ENCODE measurements at regions of chr1 and their contacts with region 1.

Region 1: GRCh38 chr1:51569284-51570062 is 47.4 kb upstream of the OSBPL9 start:
- DNase-seq: peak; percentile 87 to 98
- H3K4me3 ChIP-seq: peak overlapping the region; percentile 22; the same call in 1 of the 2 replicates
- H3K27ac ChIP-seq: peak overlapping the region; percentile 97
- H3K4me1 ChIP-seq: peaks cover 80% of the 10 kb centered on the region
- H3K27me3 ChIP-seq: no peaks in the 10 kb centered on the region
- CTCF ChIP-seq: peak; percentile 52

Region 2: GRCh38 chr1:51558360-51558924 is 11.0 kb before region 1 on chr1:
- CTCF ChIA-PET with region 1: no interaction called
- POLR2A ChIA-PET with region 1: interaction called, 17 read pairs
- intact Hi-C with region 1: loop called (anchors 1 kb)
- DNase-seq: peak; percentile 93 to 99
- H3K4me3 ChIP-seq: peak overlapping the region; percentile 45; the same call in 1 of the 2 replicates
- H3K27ac ChIP-seq: peak overlapping the region; percentile 99
- H3K4me1 ChIP-seq: peaks cover 70% of the 10 kb centered on the region
- H3K27me3 ChIP-seq: no peaks in the 10 kb centered on the region
- CTCF ChIP-seq: no peak

Region 3: DNA sequence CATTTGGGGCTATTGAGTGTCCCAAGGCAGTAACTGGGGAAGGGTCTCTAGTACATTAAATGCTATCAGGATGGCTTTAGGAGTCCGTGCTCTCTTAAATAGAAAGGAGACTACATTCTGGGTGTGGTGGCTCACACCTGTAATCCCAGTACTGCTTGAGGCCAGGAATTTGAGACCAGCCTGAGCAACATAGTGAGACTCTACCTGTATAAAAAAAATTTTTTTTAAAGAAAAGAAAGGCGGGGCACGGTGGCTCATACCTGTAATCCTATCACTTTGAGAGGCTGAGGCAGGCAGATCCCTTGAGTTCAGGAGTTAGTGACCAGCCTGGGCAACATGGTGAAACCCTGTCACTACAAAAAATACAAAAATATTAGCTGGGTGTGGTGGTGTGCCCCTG is 68.9 kb after region 1 on chr1:
- CTCF ChIA-PET with region 1: no interaction called
- POLR2A ChIA-PET with region 1: no interaction called
- intact Hi-C with region 1: no loop called
- DNase-seq: peak; percentile 35 to 52
- H3K4me3 ChIP-seq: no peak overlapping the region
- H3K27ac ChIP-seq: peak overlapping the region; percentile 75
- H3K4me1 ChIP-seq: peaks cover 64% of the 10 kb centered on the region
- H3K27me3 ChIP-seq: no peaks in the 10 kb centered on the region
- CTCF ChIP-seq: no peak

Region 4: GRCh38 chr1:51648180-51649109 is 79.0 kb after region 1 on chr1:
- CTCF ChIA-PET with region 1: no interaction called
- POLR2A ChIA-PET with region 1: interaction called, 3 read pairs
- intact Hi-C with region 1: loop called (anchors 1 kb)
- DNase-seq: peak; percentile 75 to 90
- H3K4me3 ChIP-seq: peak overlapping the region; percentile 35
- H3K27ac ChIP-seq: peak overlapping the region; percentile 78
- H3K4me1 ChIP-seq: peaks cover 54% of the 10 kb centered on the region
- H3K27me3 ChIP-seq: no peaks in the 10 kb centered on the region
- CTCF ChIP-seq: no peak

Region 5: DNA sequence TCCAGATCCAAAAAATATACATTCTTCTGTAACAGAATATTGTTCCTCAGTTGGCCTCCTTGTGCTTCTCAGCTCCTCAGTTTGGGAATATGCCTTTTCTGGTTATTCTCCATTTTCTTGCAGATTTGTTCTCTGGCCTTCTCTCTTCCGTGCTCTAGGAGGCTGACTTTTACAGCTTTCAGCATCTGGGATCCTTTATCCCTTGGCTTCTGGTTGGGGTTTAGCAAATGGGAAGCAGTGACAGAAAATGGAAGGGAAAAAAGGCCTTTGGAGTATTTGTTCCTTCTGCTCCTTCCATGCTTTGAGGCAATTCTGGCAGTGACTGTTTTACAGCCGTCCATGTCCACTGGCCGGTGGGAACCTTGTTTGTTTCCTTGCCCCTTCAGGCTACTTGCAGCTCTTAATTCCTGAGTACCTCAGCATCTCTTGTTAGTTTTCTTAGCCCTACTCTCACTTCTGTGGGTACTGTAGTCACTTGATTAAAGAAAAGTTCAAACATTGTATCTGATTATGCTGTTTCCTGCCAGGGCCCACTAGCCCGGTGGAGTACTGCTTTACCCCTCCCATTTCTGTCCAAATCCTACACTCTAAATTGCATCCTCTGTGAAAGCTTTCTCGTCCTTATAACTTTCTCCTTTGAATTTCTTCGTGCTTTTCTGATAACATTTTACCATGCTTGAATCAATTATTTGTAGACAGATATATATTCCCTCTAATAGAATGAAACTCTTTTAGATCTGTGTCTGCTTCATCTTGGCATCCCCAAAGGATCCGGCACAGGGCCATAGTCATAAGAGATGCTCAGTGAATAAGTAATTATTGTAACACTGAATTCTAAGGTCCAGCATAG is 165.6 kb after region 1 on chr1:
- CTCF ChIA-PET with region 1: interaction called, 3 read pairs
- POLR2A ChIA-PET with region 1: no interaction called
- intact Hi-C with region 1: loop called (anchors 2 kb)
- DNase-seq: no peak
- H3K4me3 ChIP-seq: no peak overlapping the region
- H3K27ac ChIP-seq: peak overlapping the region; percentile 14; the same call in 1 of the 2 replicates
- H3K4me1 ChIP-seq: peaks cover 70% of the 10 kb centered on the region
- H3K27me3 ChIP-seq: no peaks in the 10 kb centered on the region
- CTCF ChIP-seq: no peak

Region 6: DNA sequence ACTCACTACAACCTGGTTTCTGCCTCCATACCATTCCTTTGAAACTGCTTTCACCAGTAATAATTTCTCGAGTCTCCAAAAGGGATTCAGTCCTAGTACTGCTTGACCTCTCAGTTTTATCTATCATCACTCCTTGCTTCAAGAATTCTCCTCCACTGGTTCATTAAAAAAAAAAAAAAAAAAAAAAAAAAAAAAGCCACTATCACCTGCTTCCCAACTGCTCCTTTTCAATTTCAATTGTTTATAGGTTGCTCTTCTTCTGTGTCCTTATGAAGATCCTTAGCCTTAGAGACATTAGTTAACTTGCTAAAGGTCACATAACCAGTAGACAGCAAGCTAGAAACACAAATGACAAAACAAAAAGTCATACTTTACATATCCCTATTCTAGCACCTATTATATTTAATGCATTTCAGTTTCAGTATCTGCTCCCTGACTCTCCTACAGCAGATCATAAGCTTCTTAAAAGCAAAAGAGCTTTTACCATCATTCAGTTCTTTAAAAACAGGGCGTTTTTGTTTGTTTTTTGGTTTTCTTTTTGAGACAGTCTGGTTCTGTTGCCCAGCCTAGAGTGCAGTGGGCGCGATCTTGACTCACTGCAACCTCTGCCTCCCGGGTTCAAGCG is 302.0 kb after region 1 on chr1:
- CTCF ChIA-PET with region 1: interaction called, 11 read pairs
- POLR2A ChIA-PET with region 1: no interaction called
- intact Hi-C with region 1: loop called (anchors 5 kb)
- DNase-seq: no peak
- H3K4me3 ChIP-seq: no peak overlapping the region
- H3K27ac ChIP-seq: no peak overlapping the region
- H3K4me1 ChIP-seq: peaks cover 20% of the 10 kb centered on the region
- H3K27me3 ChIP-seq: no peaks in the 10 kb centered on the region
- CTCF ChIP-seq: no peak